ENCODE measurements at regions of chr2 and their contacts with region 1.

Region 1: GRCh38 chr2:20635675-20636584 is 15.0 kb downstream of the HS1BP3 start:
- DNase-seq: peak; percentile 86
- H3K4me3 ChIP-seq: no peak overlapping the region
- H3K27ac ChIP-seq: no peak overlapping the region
- H3K4me1 ChIP-seq: no peaks in the 10 kb centered on the region
- H3K27me3 ChIP-seq: no peaks in the 10 kb centered on the region
- CTCF ChIP-seq: peak; percentile 98

Region 2: GRCh38 chr2:20030224-20030623 is 605.7 kb before region 1 on chr2:
- CTCF ChIA-PET with region 1: no interaction called
- POLR2A ChIA-PET with region 1: interaction called, 11 read pairs
- intact Hi-C with region 1: no loop called
- DNase-seq: no peak
- H3K4me3 ChIP-seq: no peak overlapping the region
- H3K27ac ChIP-seq: no peak overlapping the region
- H3K4me1 ChIP-seq: peaks cover 6% of the 10 kb centered on the region
- H3K27me3 ChIP-seq: no peaks in the 10 kb centered on the region
- CTCF ChIP-seq: no peak

Measured in A673 (cell line).